ENCODE measurements at regions of chr17 and their contacts with region 1.

Region 1: GRCh38 chr17:58692239-58693055 is at the start of gene RAD51C:
- DNase-seq: peak; percentile 82 to 90
- ATAC-seq: peak; percentile 100
- total RNA-seq, gene RAD51C: 7.6 to 8.1 TPM

Region 2: GRCh38 chr17:58517734-58518609 is 174.5 kb before region 1 on chr17:
- intact Hi-C with region 1: loop called in 1 of 2 experiments (anchors 10 kb)
- DNase-seq: peak; percentile 99 to 100
- ATAC-seq: peak; percentile 74